ENCODE measurements at regions of chr5 and their contacts with region 1.

Region 1: GRCh38 chr5:96868603-96869371 is 7.5 kb upstream of the ERAP2 start:
- DNase-seq: no peak
- H3K4me3 ChIP-seq: no peak overlapping the region
- H3K27ac ChIP-seq: no peak overlapping the region
- H3K4me1 ChIP-seq: peaks cover 0 to 6% (median 0%) of the 10 kb centered on the region in 4 donors
- H3K27me3 ChIP-seq: no peaks in the 10 kb centered on the region
- CTCF ChIP-seq: peak; percentile 88 to 94

Region 2: DNA sequence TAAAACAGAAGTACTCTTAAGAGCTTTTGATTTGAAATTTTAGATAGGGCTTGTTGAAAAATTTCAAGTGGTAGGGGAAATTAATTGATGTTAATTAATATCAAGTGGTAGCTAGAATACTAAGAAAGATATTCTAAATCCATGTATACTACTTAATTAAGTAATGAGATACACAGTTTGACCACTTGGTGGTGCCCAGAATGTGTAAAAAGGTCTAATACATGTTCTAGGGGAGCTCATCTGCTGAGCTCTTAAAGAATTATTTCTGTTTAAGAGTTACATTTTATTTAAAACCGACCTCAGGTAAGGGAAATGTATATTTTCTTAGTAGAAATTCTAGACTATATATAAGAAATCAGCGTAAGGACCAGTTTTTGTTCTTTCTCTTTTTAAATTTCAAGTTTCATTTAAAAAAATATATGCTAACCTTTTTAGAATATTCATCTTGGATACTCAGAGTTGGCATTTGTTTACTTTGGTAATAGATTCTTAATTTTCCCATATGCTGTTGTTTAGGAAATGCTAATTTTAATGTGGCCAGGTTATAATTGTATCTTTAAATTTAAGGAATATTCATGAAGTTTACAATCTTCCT is 128.6 kb after region 1 on chr5:
- intact Hi-C with region 1: loop called (anchors 10 kb)
- DNase-seq: no peak
- H3K4me3 ChIP-seq: no peak overlapping the region
- H3K27ac ChIP-seq: no peak overlapping the region
- H3K4me1 ChIP-seq: no peaks in the 10 kb centered on the region
- H3K27me3 ChIP-seq: no peaks in the 10 kb centered on the region
- CTCF ChIP-seq: peak; percentile 29 to 42

Region 3: GRCh38 chr5:97162045-97162444 is 293.3 kb after region 1 on chr5:
- intact Hi-C with region 1: loop called (anchors 5 kb)
- DNase-seq: peak in 1 of 2 donors; percentile 48
- H3K4me3 ChIP-seq: no peak overlapping the region
- H3K27ac ChIP-seq: no peak overlapping the region
- H3K4me1 ChIP-seq: no peaks in the 10 kb centered on the region
- H3K27me3 ChIP-seq: no peaks in the 10 kb centered on the region
- CTCF ChIP-seq: peak; percentile 78 to 88

Measured in tibial artery (tissue), 4 donors.